Cardiac septum (tissue), 1 donor: ENCODE measurements at regions of chr3 and their contacts with region 1.

Region 1: GRCh38 chr3:197428117-197428801 is 127.5 kb downstream of the BDH1 start:
- DNase-seq: peak; percentile 84

Region 2: DNA sequence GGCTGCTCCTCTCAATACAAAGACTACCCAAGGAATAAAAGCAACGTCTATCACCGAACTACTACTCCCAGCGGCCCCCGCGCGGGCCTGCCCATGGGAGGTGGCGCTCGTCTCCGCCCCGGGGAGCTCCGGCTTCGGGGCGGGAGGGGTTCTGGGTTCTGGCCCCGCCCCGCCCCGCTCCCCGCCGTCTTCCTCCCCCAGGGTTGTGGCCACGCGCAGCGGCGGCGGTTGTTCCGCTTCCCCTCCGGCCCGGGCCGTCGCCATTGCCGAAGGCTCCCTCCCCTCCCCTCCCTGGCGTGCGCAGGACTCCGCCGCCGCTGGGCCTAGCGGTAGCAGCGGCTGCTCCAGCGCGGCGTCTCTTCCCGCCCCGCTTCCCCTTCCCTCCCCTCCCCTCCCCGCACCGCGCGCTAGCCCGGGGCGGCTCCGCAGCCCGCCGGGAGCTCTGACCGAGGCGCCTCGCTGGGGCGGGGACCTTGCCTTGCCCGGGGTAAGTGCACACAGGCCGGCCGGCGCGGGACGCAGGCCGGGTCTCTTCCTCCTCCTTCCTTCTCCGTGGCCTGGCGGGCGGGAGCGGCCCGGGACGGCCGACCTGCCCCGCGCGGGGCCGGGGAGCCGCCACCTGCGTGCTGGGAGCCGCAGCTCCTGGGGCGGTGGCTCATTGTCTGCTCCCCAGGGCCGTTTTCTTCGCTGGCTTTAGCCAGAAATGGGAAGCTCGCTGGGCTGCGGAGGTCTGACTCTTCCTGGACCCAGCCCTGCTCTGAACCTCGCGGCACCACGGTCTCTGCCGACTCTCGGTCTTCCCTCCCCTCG is 688.4 kb before region 1 on chr3 and contains the start of gene PAK2:
- intact Hi-C with region 1: no loop called
- DNase-seq: peak; percentile 98
- total RNA-seq, gene PAK2: 43.3 TPM

Region 3: GRCh38 chr3:197309528-197310361 is 118.5 kb before region 1 on chr3:
- intact Hi-C with region 1: loop called (anchors 5 kb)
- DNase-seq: no peak

Region 4: GRCh38 chr3:197394464-197395321 is 33.6 kb before region 1 on chr3:
- intact Hi-C with region 1: loop called (anchors 2 kb)
- DNase-seq: peak; percentile 81